ENCODE measurements at regions of chr9 and their contacts with region 1.

Region 1: GRCh38 chr9:125407974-125408900 is 146.6 kb downstream of the GAPVD1 start:
- DNase-seq: peak; percentile 61 to 68 (median 65)
- H3K4me3 ChIP-seq: peak overlapping the region in 1 of 2 donors; percentile 35
- H3K4me3 Mint-ChIP-seq: peak overlapping the region; percentile 57 to 82 (median 73)
- H3K27ac ChIP-seq: no peak overlapping the region
- H3K27ac Mint-ChIP-seq: no peak overlapping the region
- H3K4me1 ChIP-seq: peaks cover 9% of the 10 kb centered on the region
- H3K4me1 Mint-ChIP-seq: peaks cover 4 to 12% (median 10%) of the 10 kb centered on the region in 4 donors
- H3K27me3 ChIP-seq: no peaks in the 10 kb centered on the region
- H3K27me3 Mint-ChIP-seq: peaks cover 7 to 27% of the 10 kb centered on the region in 2 donors

Region 2: GRCh38 chr9:125631391-125632085 is 223.3 kb after region 1 on chr9:
- CTCF ChIA-PET with region 1: no interaction called
- POLR2A ChIA-PET with region 1: no interaction called
- intact Hi-C with region 1: loop called (anchors 5 kb)
- DNase-seq: peak; percentile 12 to 39 (median 16)
- H3K4me3 ChIP-seq: no peak overlapping the region
- H3K4me3 Mint-ChIP-seq: peak overlapping the region in 3 of 8 donors; percentile 2 to 20 (median 13)
- H3K27ac ChIP-seq: no peak overlapping the region
- H3K27ac Mint-ChIP-seq: peak overlapping the region in 5 of 7 donors; percentile 1 to 82 (median 39)
- H3K4me1 ChIP-seq: peaks cover 31% of the 10 kb centered on the region
- H3K4me1 Mint-ChIP-seq: peaks cover 50 to 68% (median 57%) of the 10 kb centered on the region in 4 donors
- H3K27me3 ChIP-seq: no peaks in the 10 kb centered on the region
- H3K27me3 Mint-ChIP-seq: no peaks in the 10 kb centered on the region

Region 3: GRCh38 chr9:126228781-126229444 is 820.7 kb after region 1 on chr9:
- CTCF ChIA-PET with region 1: interaction called, 15 read pairs
- POLR2A ChIA-PET with region 1: no interaction called
- intact Hi-C with region 1: no loop called
- DNase-seq: peak; percentile 47 to 58 (median 51)
- H3K4me3 ChIP-seq: no peak overlapping the region
- H3K4me3 Mint-ChIP-seq: peak overlapping the region in 1 of 8 donors; percentile 11
- H3K27ac ChIP-seq: no peak overlapping the region
- H3K27ac Mint-ChIP-seq: no peak overlapping the region
- H3K4me1 ChIP-seq: peaks cover 3% of the 10 kb centered on the region
- H3K4me1 Mint-ChIP-seq: peaks cover 0 to 8% (median 4%) of the 10 kb centered on the region in 4 donors
- H3K27me3 ChIP-seq: peaks cover 4% of the 10 kb centered on the region
- H3K27me3 Mint-ChIP-seq: peaks cover 28 to 46% of the 10 kb centered on the region in 2 donors